Ascending aorta (tissue), 2 donors: ENCODE measurements at regions of chr14 and their contacts with region 1.

Region 1: GRCh38 chr14:54686219-54686870 is 119.4 kb downstream of the SAMD4A start:
- DNase-seq: peak in 1 of 2 donors; percentile 92
- H3K4me3 ChIP-seq: peak overlapping the region in 1 of 2 donors; percentile 2
- H3K27ac ChIP-seq: peak overlapping the region; percentile 96 to 97
- H3K4me1 ChIP-seq: peaks cover 15 to 85% of the 10 kb centered on the region in 2 donors
- H3K27me3 ChIP-seq: no peaks in the 10 kb centered on the region
- CTCF ChIP-seq: no peak

Region 2: DNA sequence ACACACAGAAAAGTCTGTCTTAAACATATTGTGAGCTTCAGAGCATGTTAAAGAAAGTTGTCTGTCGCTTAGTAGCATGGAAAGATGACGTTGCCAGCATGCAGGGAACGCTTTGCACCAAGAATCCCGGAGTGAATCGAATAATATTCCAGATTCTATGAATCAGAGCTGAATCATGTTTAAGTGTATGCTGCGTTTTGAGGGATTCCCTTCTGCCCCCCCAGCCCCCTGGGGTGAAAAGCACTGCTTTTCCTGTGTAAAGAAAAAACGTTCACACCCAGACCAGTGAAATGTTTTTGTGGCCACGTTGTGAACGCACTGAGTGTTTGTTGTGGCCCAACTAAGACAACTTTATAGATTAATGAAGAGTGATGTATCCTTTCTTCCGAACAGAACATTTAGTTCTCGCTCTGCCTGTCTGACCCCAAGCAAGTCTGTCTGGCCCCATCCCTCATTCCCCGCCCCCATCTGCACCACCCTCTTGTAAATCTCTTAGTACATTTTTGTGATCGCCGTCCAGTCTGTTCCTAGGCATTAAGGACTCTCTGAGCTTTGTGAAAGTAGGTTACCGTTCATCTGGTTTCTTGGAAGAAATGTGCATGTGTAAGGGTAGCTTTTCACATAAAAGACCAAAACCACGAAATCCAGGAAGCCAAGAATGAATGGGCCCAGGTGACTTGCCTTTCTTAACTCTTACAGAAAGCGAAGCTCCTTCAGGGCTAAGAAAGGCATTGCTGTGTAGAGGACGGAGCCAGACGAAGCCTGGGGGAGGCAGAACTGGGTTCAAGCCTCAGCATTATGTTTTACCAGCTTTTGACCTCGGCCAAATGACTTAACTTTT is 16.4 kb before region 1 on chr14:
- intact Hi-C with region 1: loop called (anchors 2 kb)
- DNase-seq: peak in 1 of 2 donors; percentile 74
- H3K4me3 ChIP-seq: no peak overlapping the region
- H3K27ac ChIP-seq: peak overlapping the region; percentile 64 to 87
- H3K4me1 ChIP-seq: peaks cover 17 to 63% of the 10 kb centered on the region in 2 donors
- H3K27me3 ChIP-seq: no peaks in the 10 kb centered on the region
- CTCF ChIP-seq: no peak